Calu3 (cell line): ENCODE measurements at regions of chr6 and their contacts with region 1.

Region 1: GRCh38 chr6:107800564-107801164 is 23.4 kb downstream of the SCML4 start:
- DNase-seq: no peak
- H3K4me3 Mint-ChIP-seq: no peak overlapping the region
- H3K27ac Mint-ChIP-seq: no peak overlapping the region
- H3K4me1 Mint-ChIP-seq: peaks cover 9% of the 10 kb centered on the region
- H3K27me3 Mint-ChIP-seq: peaks cover 50% of the 10 kb centered on the region
- CTCF ChIP-seq: peak; percentile 24

Region 2: DNA sequence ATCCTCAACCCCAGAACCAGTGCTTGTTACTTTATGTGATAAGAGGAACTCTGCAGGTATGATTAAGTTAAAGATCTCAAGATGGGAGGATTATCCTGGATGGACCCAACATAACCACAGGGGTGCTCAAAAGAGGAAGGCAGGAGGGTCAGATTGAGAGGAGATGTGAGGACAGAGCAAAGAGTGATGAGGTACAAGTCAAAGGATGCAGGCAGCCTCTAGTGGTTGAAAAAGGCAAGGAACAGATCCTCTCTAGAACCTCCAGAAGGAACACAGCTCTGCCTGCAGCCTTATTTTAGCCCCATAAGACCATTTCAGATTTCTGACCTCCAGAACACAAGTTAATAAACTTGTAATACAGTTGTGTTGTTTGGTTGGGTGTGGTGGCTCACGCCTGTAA is 382.5 kb before region 1 on chr6:
- CTCF ChIA-PET with region 1: no interaction called
- intact Hi-C with region 1: no loop called
- DNase-seq: peak; percentile 6
- H3K4me3 Mint-ChIP-seq: no peak overlapping the region
- H3K27ac Mint-ChIP-seq: peak overlapping the region; percentile 40
- H3K4me1 Mint-ChIP-seq: peaks cover 8% of the 10 kb centered on the region
- H3K27me3 Mint-ChIP-seq: no peaks in the 10 kb centered on the region
- CTCF ChIP-seq: peak; percentile 19

Region 3: DNA sequence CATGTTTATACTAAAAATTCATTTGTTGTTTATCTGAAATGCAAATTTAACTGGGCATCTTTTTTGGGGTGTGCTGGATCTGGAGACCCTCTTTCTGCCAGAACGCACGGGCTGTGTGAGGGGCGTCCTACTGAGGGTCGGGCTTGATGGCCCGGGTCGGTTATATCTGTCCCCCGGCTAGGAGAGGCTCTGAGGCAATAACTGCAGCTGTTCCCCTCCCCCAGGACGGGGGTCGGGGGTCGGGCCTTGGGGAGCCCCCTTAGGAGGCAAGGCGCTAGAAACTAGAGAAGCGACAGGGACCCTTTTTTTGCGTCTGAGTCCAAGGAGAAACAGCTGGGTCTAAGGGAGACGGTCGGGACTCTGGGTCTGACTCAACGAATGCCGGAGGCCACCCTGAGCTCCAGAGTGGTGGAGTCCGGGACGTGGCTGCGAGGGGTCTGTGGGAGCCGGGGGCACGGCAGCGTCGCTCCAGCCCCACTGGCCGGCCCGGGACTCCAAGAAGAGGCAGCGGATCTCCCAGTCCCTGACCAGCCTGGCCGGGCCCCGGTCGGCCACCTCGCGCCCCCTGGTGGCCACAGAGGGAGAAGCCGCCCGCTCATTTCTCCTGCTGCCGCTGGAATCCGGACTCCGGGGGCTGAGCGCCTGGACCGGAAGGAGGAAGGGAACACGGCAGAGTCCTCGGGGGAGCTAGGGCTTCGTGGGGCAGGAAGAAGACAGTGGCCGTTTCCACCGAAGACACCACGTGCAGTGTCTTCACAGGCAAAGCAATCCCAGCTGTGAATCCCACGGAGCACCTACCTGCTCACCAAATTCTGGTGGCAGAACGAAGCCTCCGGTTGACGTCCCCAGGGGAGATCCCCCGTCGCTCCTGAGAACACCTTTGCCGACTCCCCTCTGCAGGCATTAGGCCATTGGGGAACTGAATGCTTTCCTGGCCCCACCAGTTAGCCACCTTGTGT is 47.5 kb after region 1 on chr6:
- CTCF ChIA-PET with region 1: interaction called, 3 read pairs
- intact Hi-C with region 1: loop called (anchors 1 kb)
- DNase-seq: peak; percentile 94
- H3K4me3 Mint-ChIP-seq: peak overlapping the region; percentile 70
- H3K27ac Mint-ChIP-seq: no peak overlapping the region
- H3K4me1 Mint-ChIP-seq: peaks cover 8% of the 10 kb centered on the region
- H3K27me3 Mint-ChIP-seq: no peaks in the 10 kb centered on the region
- CTCF ChIP-seq: peak; percentile 91

Region 4: GRCh38 chr6:107866606-107867301 is 66.1 kb after region 1 on chr6:
- CTCF ChIA-PET with region 1: no interaction called
- intact Hi-C with region 1: loop called (anchors 5 kb)
- DNase-seq: peak; percentile 40
- H3K4me3 Mint-ChIP-seq: no peak overlapping the region
- H3K27ac Mint-ChIP-seq: no peak overlapping the region
- H3K4me1 Mint-ChIP-seq: no peaks in the 10 kb centered on the region
- H3K27me3 Mint-ChIP-seq: no peaks in the 10 kb centered on the region
- CTCF ChIP-seq: peak; percentile 39